GM12878 (cell line): ENCODE measurements at regions of chr11 and their contacts with region 1.

Region 1: DNA sequence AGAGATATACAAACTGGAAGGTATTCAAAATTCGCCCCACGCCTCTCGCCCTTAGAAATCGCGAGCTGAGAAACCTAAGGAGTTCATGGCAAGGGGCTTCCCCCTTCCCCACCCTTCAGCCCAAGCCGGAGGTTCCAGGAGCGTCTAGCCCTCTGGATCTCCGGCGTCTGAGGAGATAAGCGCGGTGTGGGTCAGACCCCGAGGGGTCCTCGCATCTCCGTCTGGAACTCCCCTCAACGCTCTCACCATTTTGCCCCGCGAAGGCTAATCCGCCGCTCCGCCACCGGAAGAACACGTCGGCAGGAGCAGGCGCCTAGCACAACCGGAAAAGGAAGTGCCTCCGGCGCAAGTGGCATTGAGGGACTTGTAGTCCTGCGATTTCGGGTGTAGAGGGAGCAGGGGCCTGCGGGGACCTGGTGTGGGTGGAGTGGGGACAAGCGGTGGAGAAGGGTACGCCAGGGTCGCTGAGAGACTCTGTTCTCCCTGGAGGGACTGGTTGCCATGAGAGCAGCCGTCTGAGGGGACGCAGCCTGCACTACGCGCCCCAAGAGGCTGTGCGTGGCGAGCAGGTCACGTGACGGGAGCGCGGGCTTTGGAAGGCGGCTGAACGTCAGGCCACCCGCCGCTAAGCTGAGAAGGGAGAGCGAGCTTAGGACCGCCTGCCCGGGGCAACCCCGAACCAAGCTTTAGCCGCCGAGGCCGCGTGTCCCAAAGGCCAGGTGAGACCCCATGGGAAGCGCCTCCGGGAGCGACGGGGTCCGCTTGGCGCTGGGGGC is at the starts of genes FEN1 and TMEM258:
- DNase-seq: peak; percentile 76
- ATAC-seq: peak; percentile 92
- H3K4me3 ChIP-seq: peak within 1 kb of the TSS; percentile 98
- H3K27ac ChIP-seq: peak within 1 kb of the TSS; percentile 100
- H3K4me1 ChIP-seq: no peaks in the 10 kb centered on the region; the same call in 1 of the 2 replicates
- H3K27me3 ChIP-seq: no peaks in the 10 kb centered on the region
- CTCF ChIP-seq: no peak
- EP300 ChIP-seq: no peak
- POLR2A ChIP-seq: peak; percentile 98
- RAD21 ChIP-seq: no peak
- polyA plus RNA-seq, gene FEN1: 54.8 to 99.9 TPM
- polyA plus RNA-seq, gene TMEM258: 800 to 840 TPM

Region 2: GRCh38 chr11:61776551-61777075 is 15.9 kb before region 1 on chr11:
- CTCF ChIA-PET with region 1: interaction called, 12 read pairs
- POLR2A ChIA-PET with region 1: no interaction called
- RAD21 ChIA-PET with region 1: interaction called, 5 read pairs
- SMC1A ChIA-PET with region 1: interaction called, 5 read pairs
- in situ Hi-C with region 1: no loop called
- intact Hi-C with region 1: no loop called
- DNase-seq: no peak
- ATAC-seq: peak; percentile 94
- H3K4me3 ChIP-seq: no peak overlapping the region
- H3K27ac ChIP-seq: no peak overlapping the region
- H3K4me1 ChIP-seq: no peaks in the 10 kb centered on the region; the same call in 1 of the 2 replicates
- H3K27me3 ChIP-seq: no peaks in the 10 kb centered on the region
- CTCF ChIP-seq: peak; percentile 71 to 86 (median 83)
- EP300 ChIP-seq: no peak
- POLR2A ChIP-seq: no peak
- RAD21 ChIP-seq: peak; percentile 80

Region 3: GRCh38 chr11:61827571-61828378 is 35.3 kb after region 1 on chr11 and contains the start of gene FADS2:
- CTCF ChIA-PET with region 1: interaction called, 75 read pairs
- POLR2A ChIA-PET with region 1: interaction called, 21 read pairs
- RAD21 ChIA-PET with region 1: interaction called, 48 read pairs
- SMC1A ChIA-PET with region 1: interaction called, 28 read pairs
- in situ Hi-C with region 1: no loop called
- intact Hi-C with region 1: no loop called
- DNase-seq: peak; percentile 81
- ATAC-seq: peak; percentile 87
- H3K4me3 ChIP-seq: peak within 1 kb of the TSS; percentile 100
- H3K27ac ChIP-seq: peak within 1 kb of the TSS; percentile 95
- H3K4me1 ChIP-seq: peaks cover 19% of the 10 kb centered on the region
- H3K27me3 ChIP-seq: no peaks in the 10 kb centered on the region
- CTCF ChIP-seq: peak in 2 of 3 experiments; percentile 9 to 14; a peak in 2 of 6 replicates
- EP300 ChIP-seq: no peak
- POLR2A ChIP-seq: peak; percentile 84
- RAD21 ChIP-seq: no peak
- polyA plus RNA-seq, gene FADS2: 3.3 to 6.4 TPM

Region 4: DNA sequence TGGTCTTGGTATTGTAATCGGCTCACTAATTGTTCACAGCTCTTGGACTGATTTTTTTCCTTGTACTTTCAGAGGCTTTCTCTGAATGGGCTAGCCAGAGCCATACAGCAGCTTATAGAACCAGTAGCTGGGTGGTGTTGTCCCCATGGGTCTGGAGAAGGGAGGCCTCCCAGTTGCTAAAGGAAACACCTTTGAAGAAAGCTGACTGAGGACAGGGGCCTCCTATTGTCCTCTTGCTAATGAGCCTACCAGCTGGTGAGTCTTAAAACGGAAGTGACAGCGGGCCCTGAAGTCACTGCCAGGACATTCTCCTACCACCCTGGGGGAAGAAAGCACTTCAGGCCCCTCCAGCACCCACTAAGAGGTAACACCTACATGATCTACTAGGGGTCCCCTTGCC is 88.9 kb after region 1 on chr11:
- CTCF ChIA-PET with region 1: interaction called, 21 read pairs
- POLR2A ChIA-PET with region 1: interaction called, 5 read pairs
- RAD21 ChIA-PET with region 1: interaction called, 10 read pairs
- SMC1A ChIA-PET with region 1: interaction called, 9 read pairs
- in situ Hi-C with region 1: no loop called
- intact Hi-C with region 1: no loop called
- DNase-seq: no peak
- ATAC-seq: peak; percentile 43
- H3K4me3 ChIP-seq: no peak overlapping the region
- H3K27ac ChIP-seq: no peak overlapping the region
- H3K4me1 ChIP-seq: peaks cover 22% of the 10 kb centered on the region
- H3K27me3 ChIP-seq: no peaks in the 10 kb centered on the region; a peak in 1 of 4 replicates
- CTCF ChIP-seq: no peak
- EP300 ChIP-seq: no peak
- POLR2A ChIP-seq: no peak
- RAD21 ChIP-seq: no peak

Region 5: GRCh38 chr11:61947486-61948210 is 155.2 kb after region 1 on chr11:
- CTCF ChIA-PET with region 1: interaction called, 188 read pairs
- POLR2A ChIA-PET with region 1: interaction called, 4 read pairs
- RAD21 ChIA-PET with region 1: interaction called, 96 read pairs
- SMC1A ChIA-PET with region 1: interaction called, 86 read pairs
- in situ Hi-C with region 1: no loop called
- intact Hi-C with region 1: loop called (anchors 1 kb)
- DNase-seq: no peak
- ATAC-seq: peak; percentile 93
- H3K4me3 ChIP-seq: no peak overlapping the region
- H3K27ac ChIP-seq: no peak overlapping the region
- H3K4me1 ChIP-seq: no peaks in the 10 kb centered on the region
- H3K27me3 ChIP-seq: no peaks in the 10 kb centered on the region; a peak in 1 of 4 replicates
- CTCF ChIP-seq: peak; percentile 94 to 98 (median 96)
- EP300 ChIP-seq: no peak
- POLR2A ChIP-seq: no peak
- RAD21 ChIP-seq: peak; percentile 94